PC-9 (cell line): ENCODE measurements at regions of chr13 and their contacts with region 1.

Region 1: DNA sequence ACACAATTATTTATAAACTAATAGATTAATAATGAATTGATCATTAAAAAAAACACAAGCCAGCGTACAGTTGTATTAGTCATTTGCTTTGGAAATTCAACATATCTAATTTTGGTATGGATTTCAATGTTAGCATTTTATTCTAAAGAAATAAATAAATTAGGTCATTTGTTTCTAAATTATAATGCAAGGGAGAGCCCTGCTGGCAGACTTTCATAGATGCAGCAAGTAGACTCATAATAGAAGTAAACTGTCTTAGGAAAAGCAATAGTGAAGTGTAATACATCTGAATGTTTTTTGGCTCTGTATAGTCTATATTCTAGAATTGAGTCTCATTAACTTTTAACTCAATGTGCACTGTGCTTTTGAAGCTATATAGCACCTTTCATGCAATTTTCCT is 982.4 kb upstream of the MIR17HG start:
- DNase-seq: no peak
- H3K4me3 ChIP-seq: no peak overlapping the region
- H3K27ac ChIP-seq: no peak overlapping the region
- H3K4me1 ChIP-seq: no peaks in the 10 kb centered on the region
- H3K27me3 ChIP-seq: no peaks in the 10 kb centered on the region
- CTCF ChIP-seq: 0 out of 2 replicates have a peak, but pooled peaks have one; percentile 17

Region 2: DNA sequence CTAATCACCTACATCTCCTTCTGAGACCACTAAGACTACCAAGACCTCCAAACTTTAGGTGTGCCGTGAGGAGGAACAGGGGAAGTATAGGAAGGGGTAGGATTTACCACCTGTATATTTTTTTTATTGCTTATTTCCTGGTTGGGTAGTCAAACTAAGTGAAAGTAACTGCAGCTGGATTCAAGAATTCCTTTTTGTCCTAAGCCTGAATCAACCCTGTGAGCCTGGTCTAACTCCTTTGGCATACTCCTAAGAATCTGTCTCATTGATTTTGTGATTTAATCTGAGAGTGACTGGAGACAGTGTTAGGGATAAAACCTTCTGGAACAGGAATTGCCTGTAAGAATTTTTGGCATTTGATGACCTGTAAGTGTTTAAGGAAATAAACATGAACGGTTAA is 458.9 kb after region 1 on chr13:
- CTCF ChIA-PET with region 1: interaction called, 18 read pairs
- POLR2A ChIA-PET with region 1: no interaction called
- intact Hi-C with region 1: no loop called
- DNase-seq: no peak
- H3K4me3 ChIP-seq: no peak overlapping the region
- H3K27ac ChIP-seq: no peak overlapping the region
- H3K4me1 ChIP-seq: no peaks in the 10 kb centered on the region
- H3K27me3 ChIP-seq: no peaks in the 10 kb centered on the region
- CTCF ChIP-seq: no peak